Activated CD4-positive, alpha-beta memory T cell treated with anti-CD3 and anti-CD28 coated beads for 36 hours (primary cell): ENCODE measurements at regions of chr4 and their contacts with region 1.

Region 1: GRCh38 chr4:781493-782216 is 44.3 kb downstream of the CPLX1 start:
- DNase-seq: peak; percentile 100
- H3K4me3 Mint-ChIP-seq: peak overlapping the region; percentile 83
- H3K27ac Mint-ChIP-seq: peak overlapping the region; percentile 90
- H3K4me1 Mint-ChIP-seq: peaks cover 47% of the 10 kb centered on the region
- H3K27me3 Mint-ChIP-seq: peaks cover 17% of the 10 kb centered on the region

Region 2: DNA sequence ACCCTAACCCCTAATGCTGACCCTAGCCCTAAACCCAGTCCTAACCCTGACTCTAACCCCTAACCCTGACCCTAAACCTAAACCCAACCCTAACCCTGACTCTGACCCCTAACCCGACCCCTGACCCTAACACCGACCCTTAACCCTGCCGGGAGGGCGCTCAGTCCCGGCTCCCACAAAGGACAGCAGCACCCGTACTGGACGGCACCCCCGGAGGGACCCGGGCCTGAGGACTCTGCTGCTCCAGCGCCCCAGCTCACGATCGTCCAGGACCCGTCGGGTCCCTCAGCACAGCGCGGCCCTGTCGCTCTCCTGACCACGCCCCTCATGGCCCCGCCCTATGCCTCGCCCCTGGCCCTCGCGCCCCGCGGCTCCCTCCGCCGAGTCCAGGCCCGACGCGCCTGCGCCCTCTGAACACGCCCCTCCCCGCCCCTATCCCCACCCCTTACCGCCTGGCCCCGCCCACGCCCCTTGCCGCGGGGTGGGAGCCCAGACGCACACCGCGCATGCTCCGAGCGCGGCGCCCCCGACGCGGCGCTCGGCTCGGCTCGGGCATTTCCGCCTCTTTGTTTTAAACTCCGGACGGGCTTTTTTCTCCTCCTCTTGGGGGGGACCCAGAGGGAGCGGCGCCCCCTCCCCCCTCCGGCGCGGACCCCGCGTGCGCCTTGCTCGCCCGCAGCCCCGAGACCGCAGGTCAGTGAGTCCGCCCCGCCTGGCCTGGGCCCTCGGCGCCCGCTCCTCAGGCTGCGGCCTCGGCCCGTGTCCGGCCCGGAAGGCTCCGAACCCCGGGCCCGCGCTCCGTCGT is 76.2 kb before region 1 on chr4 and contains the start of gene PCGF3:
- CTCF ChIA-PET with region 1: no interaction called
- POLR2A ChIA-PET with region 1: no interaction called
- intact Hi-C with region 1: loop called (anchors 1 kb)
- DNase-seq: peak; percentile 98
- H3K4me3 Mint-ChIP-seq: peak within 1 kb of the TSS; percentile 75
- H3K27ac Mint-ChIP-seq: peak within 1 kb of the TSS; percentile 23
- H3K4me1 Mint-ChIP-seq: peaks cover 22% of the 10 kb centered on the region
- H3K27me3 Mint-ChIP-seq: no peaks in the 10 kb centered on the region
- total RNA-seq, gene PCGF3: 27.8 to 29.3 TPM

Region 3: GRCh38 chr4:742742-743311 is 38.8 kb before region 1 on chr4:
- CTCF ChIA-PET with region 1: interaction called, 23 read pairs
- POLR2A ChIA-PET with region 1: no interaction called
- intact Hi-C with region 1: no loop called
- DNase-seq: peak; percentile 85
- H3K4me3 Mint-ChIP-seq: no peak overlapping the region
- H3K27ac Mint-ChIP-seq: no peak overlapping the region
- H3K4me1 Mint-ChIP-seq: no peaks in the 10 kb centered on the region
- H3K27me3 Mint-ChIP-seq: no peaks in the 10 kb centered on the region

Region 4: DNA sequence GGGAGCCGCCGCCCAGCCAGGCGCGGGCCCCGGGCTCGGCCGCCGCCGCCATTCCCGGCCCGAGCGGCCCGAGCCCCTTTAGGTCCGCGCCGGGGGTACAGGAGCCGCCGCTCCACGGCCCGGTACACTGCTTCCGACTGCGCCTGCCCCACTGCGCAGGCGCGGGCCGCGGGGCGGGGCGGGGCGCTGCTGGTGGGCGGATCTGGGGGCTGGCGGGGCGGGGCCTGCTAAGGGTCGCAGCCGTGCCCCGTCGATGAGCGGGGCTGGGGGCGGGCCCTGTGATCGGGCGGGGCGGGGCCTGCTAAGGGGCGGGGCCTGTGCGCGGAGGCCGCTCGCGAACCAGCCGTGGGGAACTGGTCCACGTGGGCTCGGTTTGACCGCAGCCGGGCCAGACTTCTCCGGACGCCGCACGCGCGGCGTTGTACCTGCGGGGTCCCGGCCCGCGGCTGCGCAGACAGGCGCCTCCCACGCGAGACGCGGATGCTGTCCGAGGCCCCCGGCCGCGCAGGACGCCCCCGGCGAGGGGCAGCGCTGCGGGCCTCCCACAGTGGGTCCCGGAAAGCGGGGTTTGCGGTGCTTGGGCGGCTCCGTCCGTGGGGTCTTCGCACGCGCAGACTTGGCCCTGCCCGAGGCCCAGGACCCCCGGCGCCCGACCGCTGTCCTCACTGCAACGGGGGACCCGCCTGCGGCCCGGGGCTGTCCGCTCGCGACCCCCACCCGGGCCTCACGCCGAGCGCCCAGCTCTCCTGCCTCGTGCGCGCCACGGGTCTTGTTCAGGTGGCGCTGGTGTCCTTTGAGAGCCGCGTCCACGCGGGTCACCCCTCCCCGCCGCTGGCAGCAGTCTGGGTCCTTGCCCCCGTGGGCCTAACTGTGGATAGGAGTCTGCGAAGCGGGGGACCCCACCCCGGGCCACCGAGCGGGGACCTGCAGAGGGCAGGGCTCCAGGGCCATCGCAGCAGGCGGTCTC is 192.1 kb after region 1 on chr4 and contains the start of gene DGKQ:
- CTCF ChIA-PET with region 1: no interaction called
- POLR2A ChIA-PET with region 1: interaction called, 3 read pairs
- intact Hi-C with region 1: loop called (anchors 5 kb)
- DNase-seq: peak; percentile 92
- H3K4me3 Mint-ChIP-seq: peak within 1 kb of the TSS; percentile 55
- H3K27ac Mint-ChIP-seq: no peak within 1 kb of the TSS
- H3K4me1 Mint-ChIP-seq: peaks cover 8% of the 10 kb centered on the region
- H3K27me3 Mint-ChIP-seq: no peaks in the 10 kb centered on the region
- total RNA-seq, gene DGKQ: 11.1 to 11.4 TPM